ENCODE measurements at regions of chr5 and their contacts with region 1.

Region 1: GRCh38 chr5:135034236-135034962 is 371 bp upstream of the PITX1 start:
- DNase-seq: peak; percentile 62 to 79
- H3K4me3 ChIP-seq: peak overlapping the region; percentile 100
- H3K27ac ChIP-seq: peak overlapping the region; percentile 70
- H3K4me1 ChIP-seq: peaks cover 17% of the 10 kb centered on the region
- H3K27me3 ChIP-seq: no peaks in the 10 kb centered on the region
- CTCF ChIP-seq: no peak

Region 2: GRCh38 chr5:135085127-135085935 is 50.9 kb after region 1 on chr5:
- CTCF ChIA-PET with region 1: no interaction called
- POLR2A ChIA-PET with region 1: no interaction called
- intact Hi-C with region 1: loop called (anchors 10 kb)
- DNase-seq: peak; percentile 75 to 94
- H3K4me3 ChIP-seq: peak overlapping the region; percentile 42; the same call in 1 of the 2 replicates
- H3K27ac ChIP-seq: peak overlapping the region; percentile 97
- H3K4me1 ChIP-seq: peaks cover 48% of the 10 kb centered on the region
- H3K27me3 ChIP-seq: no peaks in the 10 kb centered on the region
- CTCF ChIP-seq: 0 out of 2 replicates have a peak, but pooled peaks have one; percentile 33

Region 3: GRCh38 chr5:135185481-135186065 is 151.2 kb after region 1 on chr5:
- CTCF ChIA-PET with region 1: no interaction called
- POLR2A ChIA-PET with region 1: no interaction called
- intact Hi-C with region 1: loop called (anchors 2 kb)
- DNase-seq: no peak
- H3K4me3 ChIP-seq: no peak overlapping the region
- H3K27ac ChIP-seq: no peak overlapping the region; the same call in 1 of the 2 replicates
- H3K4me1 ChIP-seq: peaks cover 26% of the 10 kb centered on the region
- H3K27me3 ChIP-seq: no peaks in the 10 kb centered on the region
- CTCF ChIP-seq: no peak